HEK293T (cell line): ENCODE measurements at regions of chr3 and their contacts with region 1.

Region 1: GRCh38 chr3:49007068-49007770 is at the start of gene WDR6:
- DNase-seq: peak; percentile 97

Region 2: GRCh38 chr3:48952510-48953118 is 54.6 kb before region 1 on chr3:
- CTCF ChIA-PET with region 1: no interaction called
- POLR2A ChIA-PET with region 1: no interaction called
- DNase-seq: peak; percentile 23

Region 3: GRCh38 chr3:49021813-49022687 is 14.8 kb after region 1 on chr3 and contains the start of gene NDUFAF3:
- CTCF ChIA-PET with region 1: interaction called, 15 read pairs
- POLR2A ChIA-PET with region 1: interaction called, 204 read pairs
- DNase-seq: peak; percentile 85

Region 4: DNA sequence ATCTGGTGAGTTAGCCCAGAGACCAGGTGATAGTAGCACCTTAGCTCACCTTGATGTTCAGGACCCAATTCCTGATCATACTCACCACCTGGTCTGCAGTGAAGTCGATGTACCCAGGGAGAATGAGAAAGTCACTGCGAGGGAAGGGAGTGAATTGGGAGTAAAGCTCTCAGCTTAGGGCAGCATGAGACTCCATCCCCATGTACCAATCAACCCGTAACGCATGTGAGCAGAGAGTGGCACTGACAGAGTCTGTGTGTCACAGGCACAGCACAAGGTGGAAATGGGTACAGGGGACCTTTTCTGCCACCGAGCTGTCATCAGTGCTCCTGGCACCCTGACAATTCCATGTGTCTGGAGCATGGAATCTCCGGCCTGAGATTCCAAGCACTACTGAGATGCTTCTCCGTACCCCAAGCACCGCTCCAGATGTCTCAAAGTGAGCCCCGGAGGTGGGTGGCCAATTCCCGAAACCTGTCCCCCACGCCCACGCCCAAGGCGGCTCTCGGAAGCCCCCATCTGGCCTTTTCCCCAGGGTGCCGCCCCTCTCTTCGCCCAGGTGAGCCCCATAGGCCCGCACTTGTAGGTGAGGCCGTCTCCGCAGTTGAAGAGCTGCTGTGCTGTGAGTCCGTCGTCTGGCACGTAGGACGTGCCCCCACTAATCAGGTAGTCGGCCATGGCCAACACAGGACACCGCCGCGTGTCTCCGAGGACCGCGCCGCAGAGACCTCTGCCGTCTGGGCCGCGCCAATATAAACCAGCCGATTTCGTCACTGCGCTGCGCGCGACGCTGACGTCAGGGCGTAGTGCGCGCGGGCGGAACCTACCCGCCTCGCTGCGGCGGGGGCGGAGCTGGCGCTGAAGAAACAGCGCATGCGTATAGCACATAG is 21.7 kb after region 1 on chr3 and contains the start of gene IMPDH2:
- CTCF ChIA-PET with region 1: no interaction called
- POLR2A ChIA-PET with region 1: interaction called, 204 read pairs
- DNase-seq: peak; percentile 95